Mucosa of descending colon (tissue), 3 donors: ENCODE measurements at regions of chr10 and their contacts with region 1.

Region 1: DNA sequence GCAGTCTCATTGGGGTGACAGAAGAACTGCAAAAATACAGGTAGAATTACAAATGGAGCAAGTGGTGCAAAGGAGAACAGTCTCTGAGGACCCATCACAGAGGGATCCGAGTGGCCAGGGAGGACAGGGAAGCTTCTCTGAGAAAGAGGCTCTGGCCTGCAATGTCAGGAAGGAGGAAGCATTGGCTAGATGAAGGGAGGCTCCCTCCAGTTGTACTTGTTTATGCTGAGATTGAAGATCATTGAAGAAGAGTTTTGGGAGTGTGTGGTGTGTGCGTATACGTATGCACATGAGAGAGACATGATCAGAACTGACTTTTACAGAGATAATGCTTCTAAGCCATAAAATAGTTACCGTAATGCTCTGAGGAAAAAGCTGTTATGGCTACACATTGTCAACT is 274.7 kb upstream of the FZD8 start:
- DNase-seq: peak in 1 of 3 donors; percentile 10
- ATAC-seq: peak; percentile 80
- H3K4me3 ChIP-seq: no peak overlapping the region
- H3K4me1 ChIP-seq: no peaks in the 10 kb centered on the region
- CTCF ChIP-seq: no peak

Region 2: GRCh38 chr10:35642027-35642792 is 274.6 kb before region 1 on chr10 and contains the start of gene FZD8:
- intact Hi-C with region 1: loop called in 1 of 2 experiments (anchors 5 kb)
- DNase-seq: peak; percentile 92 to 95 (median 93)
- ATAC-seq: peak; percentile 89
- H3K4me3 ChIP-seq: peak within 1 kb of the TSS; percentile 75
- H3K4me1 ChIP-seq: peaks cover 15% of the 10 kb centered on the region
- CTCF ChIP-seq: peak; percentile 7
- total RNA-seq, gene FZD8: 13.4 to 31.3 (median 14.8) TPM

Region 3: DNA sequence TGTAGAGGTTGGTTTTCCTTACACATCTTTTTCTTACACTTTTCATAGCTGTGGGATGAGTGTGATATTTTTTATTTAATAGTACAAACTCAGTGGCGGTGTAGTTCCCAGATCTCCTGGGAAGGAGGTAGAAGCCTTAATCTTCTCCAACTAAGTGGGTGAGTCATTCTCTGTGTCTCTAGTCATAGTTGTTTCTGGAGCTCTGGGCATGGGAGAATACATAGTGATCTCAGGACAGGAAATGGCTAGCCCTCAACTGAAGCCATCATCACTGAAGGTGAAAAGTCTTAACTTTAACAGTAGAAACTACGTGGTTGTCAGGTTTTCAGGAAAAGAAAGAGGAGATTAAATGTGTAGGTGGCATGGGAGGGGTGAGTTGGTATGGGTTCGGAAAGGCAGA is 44.7 kb after region 1 on chr10:
- intact Hi-C with region 1: no loop called
- DNase-seq: no peak
- ATAC-seq: no peak
- H3K4me3 ChIP-seq: no peak overlapping the region
- H3K4me1 ChIP-seq: no peaks in the 10 kb centered on the region
- CTCF ChIP-seq: no peak